IMR-90 (cell line): ENCODE measurements at regions of chr12 and their contacts with region 1.

Region 1: GRCh38 chr12:67918441-67918840 is 70.8 kb upstream of the IFNG-AS1 start:
- DNase-seq: no peak
- ATAC-seq: no peak
- H3K4me3 ChIP-seq: no peak overlapping the region
- H3K27ac ChIP-seq: no peak overlapping the region
- H3K4me1 ChIP-seq: no peaks in the 10 kb centered on the region
- H3K27me3 ChIP-seq: no peaks in the 10 kb centered on the region
- CTCF ChIP-seq: no peak
- POLR2A ChIP-seq: no peak
- RAD21 ChIP-seq: no peak

Region 2: DNA sequence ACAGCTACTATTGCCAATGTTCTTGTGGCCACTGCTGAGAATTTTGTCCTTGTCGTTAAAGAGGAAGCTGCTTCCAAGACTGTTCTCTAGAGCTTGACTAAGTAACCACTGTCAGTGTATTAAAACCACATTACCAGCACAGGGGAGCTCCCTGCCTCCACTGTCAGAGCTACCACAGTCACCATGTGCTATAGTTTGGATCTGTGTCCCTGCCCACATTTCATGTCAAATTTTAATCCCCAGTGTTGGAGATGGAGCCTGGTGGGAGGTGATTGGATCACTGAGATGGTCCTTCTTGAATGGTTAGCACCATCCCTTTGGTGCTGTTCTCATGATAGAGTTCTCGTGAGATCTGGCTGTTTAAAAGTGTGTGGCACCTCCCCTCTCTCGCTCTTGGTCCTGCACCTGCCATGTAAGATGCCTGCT is 669.0 kb after region 1 on chr12:
- CTCF ChIA-PET with region 1: no interaction called
- POLR2A ChIA-PET with region 1: interaction called, 17 read pairs
- dilution Hi-C with region 1: no loop called
- in situ Hi-C with region 1: no loop called
- intact Hi-C with region 1: no loop called
- DNase-seq: no peak
- ATAC-seq: no peak
- H3K4me3 ChIP-seq: no peak overlapping the region
- H3K27ac ChIP-seq: no peak overlapping the region
- H3K4me1 ChIP-seq: no peaks in the 10 kb centered on the region
- H3K27me3 ChIP-seq: no peaks in the 10 kb centered on the region
- CTCF ChIP-seq: no peak
- POLR2A ChIP-seq: no peak
- RAD21 ChIP-seq: no peak